Heart left ventricle (tissue), 16 donors: ENCODE measurements at regions of chr1 and their contacts with region 1.

Region 1: DNA sequence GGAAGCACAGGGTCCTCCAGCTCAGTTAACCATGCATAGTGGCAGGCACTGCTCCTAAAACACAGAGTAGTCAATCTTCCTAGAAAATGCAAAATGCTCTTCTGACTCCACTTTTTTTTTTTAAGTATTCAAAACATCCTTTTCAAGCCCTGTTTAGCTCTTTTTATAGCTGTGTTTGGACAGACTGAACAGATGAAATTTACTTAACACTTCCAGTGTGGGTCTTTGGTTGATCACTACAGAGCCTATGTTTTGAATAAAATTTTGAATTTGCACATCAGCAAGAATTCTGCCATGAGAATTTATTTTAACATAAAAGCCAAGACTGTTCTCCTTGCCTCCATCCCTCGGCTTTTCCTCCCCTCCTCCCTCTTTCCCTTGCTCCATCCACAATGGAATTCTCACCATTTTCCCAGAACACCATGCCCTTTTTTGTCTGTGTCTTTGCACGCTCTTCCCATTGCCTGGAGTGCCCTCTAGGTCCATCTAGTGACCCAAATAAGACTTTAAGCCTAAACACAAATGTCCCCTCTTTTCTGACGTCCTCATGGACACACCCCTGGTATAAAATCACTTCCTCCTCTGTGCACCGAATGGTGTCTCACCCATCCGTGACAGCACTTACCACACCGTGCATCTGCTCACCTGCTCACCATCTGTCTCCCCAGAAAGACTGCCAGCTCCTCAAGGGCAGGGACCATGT is 24.0 kb upstream of the CPT2 start:
- DNase-seq: no peak
- ATAC-seq: peak; percentile 28 to 47 (median 40)
- H3K4me3 ChIP-seq: no peak overlapping the region
- H3K27ac ChIP-seq: peak overlapping the region in 2 of 12 donors; percentile 13 to 30
- H3K4me1 ChIP-seq: peaks cover 0 to 32% (median 11%) of the 10 kb centered on the region in 12 donors
- H3K27me3 ChIP-seq: no peaks in the 10 kb centered on the region
- CTCF ChIP-seq: peak in 7 of 12 donors; percentile 11 to 43 (median 35)
- POLR2A ChIP-seq: no peak

Region 2: DNA sequence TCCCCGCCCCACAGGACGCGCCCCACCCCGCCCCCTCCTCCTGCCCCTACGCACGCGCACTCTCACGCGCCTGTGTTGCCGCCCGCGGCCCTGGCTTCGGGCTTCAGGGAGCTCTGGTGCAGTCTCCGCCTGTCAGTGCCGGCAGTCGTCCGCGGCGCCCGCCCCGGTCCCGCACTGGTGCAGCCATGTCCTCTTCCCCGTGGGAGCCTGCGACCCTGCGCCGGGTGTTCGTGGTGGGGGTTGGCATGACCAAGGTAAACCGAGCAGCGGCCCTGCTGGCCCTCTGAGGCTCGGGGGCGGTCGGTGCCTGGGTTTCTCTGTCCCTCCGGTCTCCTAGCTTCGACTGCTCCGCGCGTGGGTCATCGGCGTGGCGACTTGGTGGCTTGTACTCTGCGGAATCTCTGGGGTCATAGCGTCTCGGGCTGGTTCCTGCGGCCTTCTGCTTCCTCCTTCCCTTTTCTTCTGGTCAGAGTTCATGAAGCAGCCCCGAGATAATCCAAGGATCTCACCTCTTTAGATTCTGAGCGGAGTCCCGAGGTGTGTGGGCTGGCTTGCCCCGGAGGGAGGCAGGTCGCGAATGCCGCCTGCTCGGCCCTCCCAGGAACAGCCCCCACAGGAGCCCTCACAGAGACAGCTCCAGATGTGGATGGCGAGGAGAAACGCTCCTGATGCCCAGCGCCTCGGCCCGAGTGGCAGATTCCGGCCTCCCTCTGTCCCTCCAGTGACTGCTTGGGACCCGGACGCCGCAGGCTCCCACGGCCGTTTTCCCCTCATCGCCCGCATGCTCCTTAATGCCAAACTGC is 245.2 kb before region 1 on chr1 and contains the start of gene SCP2:
- intact Hi-C with region 1: loop called in 3 of 10 experiments (anchors 2 to 10 kb)
- DNase-seq: peak; percentile 86 to 94 (median 88)
- ATAC-seq: peak; percentile 89 to 97 (median 96)
- H3K4me3 ChIP-seq: peak within 1 kb of the TSS; percentile 43 to 90 (median 80)
- H3K27ac ChIP-seq: peak within 1 kb of the TSS; percentile 57 to 93 (median 82)
- H3K4me1 ChIP-seq: peaks cover 0 to 33% (median 16%) of the 10 kb centered on the region in 12 donors
- H3K27me3 ChIP-seq: no peaks in the 10 kb centered on the region
- CTCF ChIP-seq: no peak
- POLR2A ChIP-seq: peak in 1 of 2 donors; percentile 64
- total RNA-seq, gene SCP2: 83.4 to 143 (median 132) TPM

Region 3: GRCh38 chr1:53091841-53092645 is 80.5 kb before region 1 on chr1:
- intact Hi-C with region 1: loop called in 1 of 10 experiments (anchors 10 kb)
- DNase-seq: peak; percentile 67 to 88 (median 81)
- ATAC-seq: peak; percentile 75 to 85 (median 78)
- H3K4me3 ChIP-seq: no peak overlapping the region
- H3K27ac ChIP-seq: peak overlapping the region in 1 of 12 donors; percentile 34
- H3K4me1 ChIP-seq: peaks cover 0 to 37% (median 15%) of the 10 kb centered on the region in 12 donors
- H3K27me3 ChIP-seq: no peaks in the 10 kb centered on the region
- CTCF ChIP-seq: no peak
- POLR2A ChIP-seq: no peak